Mammary epithelial cell (primary cell): ENCODE measurements at regions of chr9 and their contacts with region 1.

Region 1: DNA sequence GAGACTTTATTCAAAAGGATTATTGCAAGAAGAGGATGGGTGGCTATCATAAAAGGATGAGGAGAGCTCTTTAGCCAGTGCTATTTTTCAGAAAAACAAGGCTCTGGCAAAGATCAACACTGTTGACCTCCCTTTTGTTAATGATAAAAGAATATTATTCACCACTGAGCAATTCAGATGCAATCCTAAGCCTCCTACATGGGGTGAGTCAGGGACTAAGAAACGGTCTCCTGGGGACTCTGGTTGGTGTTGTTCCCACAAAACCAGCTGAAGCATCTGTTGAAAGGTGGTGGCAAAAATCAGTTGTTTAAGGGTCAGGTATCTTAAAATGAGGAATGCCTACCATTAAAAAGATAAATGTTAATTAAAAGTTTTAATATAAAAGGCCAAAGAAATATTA is 7.7 kb upstream of the GCNT1 start:
- DNase-seq: peak; percentile 57
- H3K4me3 ChIP-seq: no peak overlapping the region
- H3K27ac ChIP-seq: no peak overlapping the region
- H3K4me1 ChIP-seq: peaks cover 13% of the 10 kb centered on the region
- H3K27me3 ChIP-seq: no peaks in the 10 kb centered on the region
- CTCF ChIP-seq: no peak

Region 2: DNA sequence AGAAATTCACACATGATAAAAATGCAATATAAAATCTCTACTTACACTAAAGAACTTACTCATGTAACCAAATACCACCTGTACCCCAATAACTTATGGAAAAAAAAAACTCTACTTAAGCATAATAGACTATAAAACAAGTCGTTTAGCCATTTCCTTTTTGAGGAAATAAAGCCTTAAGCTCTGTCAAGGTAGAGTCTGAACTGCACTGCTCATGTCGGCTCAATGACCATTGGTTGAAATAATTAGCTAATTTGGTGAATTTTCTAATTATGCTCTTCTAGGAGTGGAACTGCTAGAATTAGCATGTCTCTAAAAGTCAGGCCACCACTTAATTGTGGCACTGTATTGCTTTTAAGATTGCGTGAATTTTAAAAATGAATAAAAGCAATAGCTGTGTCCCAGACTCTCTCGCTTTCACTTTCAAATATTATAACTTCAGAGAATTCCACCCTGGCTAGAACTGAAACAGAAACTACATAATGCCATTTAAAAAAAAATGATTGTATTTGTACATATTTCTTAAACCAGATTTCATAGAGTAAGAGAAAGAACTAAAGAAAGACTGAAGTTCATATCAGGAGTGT is 200.0 kb after region 1 on chr9:
- CTCF ChIA-PET with region 1: no interaction called
- dilution Hi-C with region 1: no loop called
- in situ Hi-C with region 1: loop called (anchors 5 kb)
- intact Hi-C with region 1: no loop called
- DNase-seq: no peak
- H3K4me3 ChIP-seq: no peak overlapping the region
- H3K27ac ChIP-seq: no peak overlapping the region
- H3K4me1 ChIP-seq: peaks cover 25% of the 10 kb centered on the region
- H3K27me3 ChIP-seq: no peaks in the 10 kb centered on the region
- CTCF ChIP-seq: no peak